Left colon (tissue), 2 donors: ENCODE measurements at regions of chr2 and their contacts with region 1.

Region 1: DNA sequence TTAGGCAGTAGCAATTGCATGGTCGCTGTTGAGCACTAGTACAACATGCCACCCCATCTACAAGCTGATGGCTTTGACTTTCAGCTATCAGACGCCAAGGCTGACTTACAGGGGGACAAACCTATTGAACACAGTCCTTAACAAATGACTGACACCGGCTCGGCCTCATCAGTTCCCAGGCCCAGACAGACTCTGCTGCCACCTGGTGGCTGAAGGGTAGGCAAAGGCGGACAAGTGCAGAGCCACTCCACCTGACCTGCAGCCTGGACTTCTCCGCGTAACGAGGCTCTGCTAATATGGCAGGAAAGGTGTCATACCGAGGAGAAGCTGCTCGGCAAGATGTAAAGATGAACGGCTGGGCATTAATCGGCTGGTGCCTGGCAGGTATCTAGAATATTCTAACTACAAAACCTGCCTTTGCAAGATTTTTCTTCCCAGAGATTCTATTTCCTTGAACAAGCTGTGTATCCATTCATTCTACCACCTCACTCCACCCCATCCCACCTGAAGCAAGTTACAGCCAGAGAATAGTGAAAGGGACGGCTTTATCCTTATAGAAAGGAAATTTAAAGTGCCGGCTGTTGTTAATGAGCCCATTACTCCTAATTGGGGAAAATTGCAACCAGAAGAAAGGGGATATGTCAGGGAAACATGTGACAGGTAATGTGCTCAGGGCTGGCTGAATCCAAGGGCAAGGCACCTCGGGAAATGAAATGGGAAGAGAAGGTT is 67.4 kb downstream of the STEAP3 start:
- DNase-seq: peak; percentile 83 to 90
- ATAC-seq: peak; percentile 99

Region 2: DNA sequence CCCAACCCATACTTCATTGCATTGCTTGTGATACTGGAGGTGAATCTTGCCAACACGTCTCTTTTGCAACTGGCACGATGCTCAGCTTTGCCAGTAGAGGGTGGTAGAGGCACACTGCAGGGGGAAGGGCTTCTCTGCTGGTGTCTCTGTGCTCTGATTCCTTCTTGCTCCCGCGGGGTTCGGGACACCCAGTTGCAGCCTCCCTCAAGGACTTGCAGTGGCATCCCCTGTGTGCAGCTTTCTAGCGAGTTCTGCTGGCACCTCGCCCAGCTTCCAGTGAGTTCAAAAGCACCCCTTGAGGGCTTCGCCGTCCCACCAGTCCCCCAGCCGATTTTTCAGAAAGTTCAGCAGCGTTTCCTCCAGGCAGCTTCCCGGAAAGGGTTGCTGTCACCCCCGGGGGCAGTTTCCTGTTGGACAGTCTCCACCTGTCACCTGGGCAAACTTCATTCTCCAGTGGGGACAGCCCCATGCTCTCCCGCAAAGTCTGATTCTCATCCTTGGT is 408.3 kb before region 1 on chr2:
- intact Hi-C with region 1: loop called in 1 of 2 experiments (anchors 5 kb)
- DNase-seq: peak; percentile 56 to 62
- ATAC-seq: peak; percentile 94

Region 3: DNA sequence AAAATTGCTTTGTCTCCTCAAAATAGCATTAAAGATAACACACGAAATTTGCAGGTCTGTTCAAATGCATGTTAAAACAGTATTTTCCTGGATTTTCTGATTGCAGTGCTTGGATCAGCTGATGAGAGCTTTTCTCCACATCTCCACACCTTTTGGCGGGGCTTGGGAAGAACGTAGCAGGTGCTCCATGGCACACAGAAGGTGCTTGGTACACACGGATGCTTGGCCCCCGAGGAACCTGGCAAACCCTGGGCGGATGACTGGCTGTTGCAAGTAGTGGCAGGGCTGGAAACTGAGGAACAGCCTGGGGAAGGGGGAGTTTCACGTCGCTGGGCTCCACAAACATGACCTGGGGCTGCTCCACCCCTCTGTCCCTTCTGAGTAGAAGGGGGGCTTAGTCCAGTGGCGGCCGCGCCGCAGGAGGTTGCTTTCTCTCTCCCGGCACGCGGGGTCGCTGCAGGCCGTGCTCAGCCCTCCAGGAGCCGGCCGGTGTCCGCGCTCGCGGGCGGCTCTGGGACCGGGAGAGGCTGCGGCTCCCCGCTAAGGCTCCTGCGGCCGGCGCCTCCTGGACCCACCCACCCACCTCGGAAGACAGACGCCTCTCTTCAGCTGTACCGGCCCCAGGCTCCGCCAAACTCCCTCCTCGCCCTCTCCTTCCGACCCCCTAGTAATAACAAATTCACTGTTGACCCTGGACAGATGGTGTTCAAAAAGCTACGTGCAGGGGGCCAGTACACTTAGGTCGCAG is 279.7 kb before region 1 on chr2:
- intact Hi-C with region 1: loop called in 1 of 2 experiments (anchors 5 kb)
- DNase-seq: peak in 1 of 2 donors; percentile 47
- ATAC-seq: peak; percentile 87

Region 4: GRCh38 chr2:119402645-119403560 is 111.9 kb after region 1 on chr2:
- intact Hi-C with region 1: no loop called
- DNase-seq: peak; percentile 51 to 83
- ATAC-seq: peak; percentile 93